ENCODE measurements at regions of chr17 and their contacts with region 1.

Region 1: DNA sequence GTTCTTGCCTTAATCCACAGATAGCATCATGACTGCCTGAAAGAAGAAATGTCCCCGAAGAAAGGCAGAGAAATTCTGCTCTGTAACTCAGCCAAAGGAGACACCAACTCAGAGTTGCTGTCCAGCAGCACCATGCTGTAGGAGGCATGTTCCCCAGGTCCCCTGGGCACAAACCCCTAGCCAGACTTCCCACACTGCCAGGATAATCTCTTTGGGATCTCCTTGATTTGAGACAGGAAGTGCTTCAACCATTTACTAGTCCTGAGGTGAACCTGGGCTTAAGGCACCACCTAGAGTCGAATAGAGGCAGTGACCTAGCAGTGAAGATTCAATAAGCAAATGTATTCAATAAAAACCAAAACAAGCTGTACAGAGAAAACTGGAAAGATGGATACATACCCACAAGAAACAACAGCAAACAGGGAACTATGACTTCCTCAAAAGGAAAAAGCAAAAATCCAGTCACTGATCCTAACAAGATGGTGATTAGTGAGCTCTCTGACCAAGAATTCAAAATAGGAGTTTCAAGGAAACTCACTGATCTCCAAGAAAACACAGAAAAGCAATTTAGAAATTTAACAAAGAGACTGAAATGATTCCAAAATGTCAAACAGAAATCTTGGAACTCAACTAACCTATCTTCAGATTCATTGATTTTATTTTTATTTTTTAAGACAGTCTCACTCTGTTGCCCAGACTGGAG is 5.7 kb downstream of the OR4D2 start:
- DNase-seq: peak in 8 of 9 experiments; percentile 19 to 82 (median 44)
- ATAC-seq: peak; percentile 76
- H3K4me3 ChIP-seq: no peak overlapping the region
- H3K4me3 Mint-ChIP-seq: peak overlapping the region; percentile 38
- H3K27ac ChIP-seq: peak overlapping the region in 1 of 2 experiments; percentile 72
- H3K27ac Mint-ChIP-seq: peak overlapping the region; percentile 66
- H3K4me1 ChIP-seq: peaks cover 43% of the 10 kb centered on the region
- H3K4me1 Mint-ChIP-seq: peaks cover 45% of the 10 kb centered on the region
- H3K27me3 ChIP-seq: no peaks in the 10 kb centered on the region
- H3K27me3 Mint-ChIP-seq: peaks cover 4% of the 10 kb centered on the region
- CTCF ChIP-seq: peak; percentile 66

Region 2: DNA sequence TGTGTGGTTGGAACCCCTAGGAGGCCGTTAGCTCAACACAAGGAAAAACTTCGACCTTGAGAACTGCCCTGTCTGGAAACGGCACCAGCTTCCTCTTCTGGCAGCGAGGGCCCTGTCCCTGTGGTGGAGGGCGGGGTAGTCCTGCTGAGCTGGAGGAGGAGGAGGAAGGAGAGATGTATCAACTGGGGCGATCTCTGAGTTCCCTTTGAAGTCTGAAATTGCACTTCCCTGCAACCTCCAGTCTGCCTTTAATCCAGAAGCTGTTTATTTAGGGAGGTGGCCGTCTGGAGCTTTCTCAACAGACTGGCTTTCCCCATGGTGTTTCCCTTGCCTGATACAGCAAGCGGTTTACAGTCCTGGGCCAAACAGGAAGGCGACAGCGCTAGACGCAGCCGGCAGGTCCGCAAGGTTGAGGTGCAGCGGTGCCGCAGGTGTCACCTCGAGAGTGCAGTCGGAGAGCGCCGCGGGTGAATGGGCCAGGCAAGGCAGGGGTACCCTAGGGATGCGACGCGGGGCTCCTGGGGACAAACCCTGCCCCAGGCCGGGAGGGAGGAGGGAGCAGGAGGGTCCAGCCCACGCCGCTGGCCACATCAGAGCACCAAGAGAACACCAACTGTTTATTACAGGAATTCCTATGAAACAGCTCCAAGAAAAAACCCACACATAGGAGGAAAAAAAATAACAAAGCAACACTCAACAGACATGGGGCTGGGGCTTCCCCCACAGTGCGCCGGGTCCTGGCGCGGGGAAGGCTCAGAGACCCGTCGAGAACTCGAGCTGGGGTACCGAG is 311.3 kb before region 1 on chr17:
- CTCF ChIA-PET with region 1: interaction called, 13 read pairs
- POLR2A ChIA-PET with region 1: interaction called, 3 read pairs
- intact Hi-C with region 1: loop called in 1 of 2 experiments (anchors 5 kb)
- DNase-seq: peak in 8 of 9 experiments; percentile 19 to 68 (median 41)
- ATAC-seq: peak; percentile 70
- H3K4me3 ChIP-seq: peak overlapping the region; percentile 34
- H3K4me3 Mint-ChIP-seq: peak overlapping the region; percentile 83
- H3K27ac ChIP-seq: no peak overlapping the region
- H3K27ac Mint-ChIP-seq: peak overlapping the region; percentile 41
- H3K4me1 ChIP-seq: peaks cover 11% of the 10 kb centered on the region
- H3K4me1 Mint-ChIP-seq: peaks cover 14% of the 10 kb centered on the region
- H3K27me3 ChIP-seq: peaks cover 0 to 7% of the 10 kb centered on the region in 2 experiments
- H3K27me3 Mint-ChIP-seq: peaks cover 10% of the 10 kb centered on the region
- CTCF ChIP-seq: no peak

Region 3: GRCh38 chr17:57987580-57988421 is 184.7 kb before region 1 on chr17 and contains the start of gene VEZF1:
- CTCF ChIA-PET with region 1: interaction called, 3 read pairs
- POLR2A ChIA-PET with region 1: no interaction called
- intact Hi-C with region 1: loop called in 1 of 2 experiments (anchors 5 kb)
- DNase-seq: peak; percentile 53 to 91 (median 79)
- ATAC-seq: peak; percentile 67
- H3K4me3 ChIP-seq: peak within 1 kb of the TSS; percentile 83 to 90
- H3K4me3 Mint-ChIP-seq: peak within 1 kb of the TSS; percentile 94
- H3K27ac ChIP-seq: peak within 1 kb of the TSS; percentile 57 to 72
- H3K27ac Mint-ChIP-seq: peak within 1 kb of the TSS; percentile 93
- H3K4me1 ChIP-seq: peaks cover 49% of the 10 kb centered on the region
- H3K4me1 Mint-ChIP-seq: peaks cover 63% of the 10 kb centered on the region
- H3K27me3 ChIP-seq: no peaks in the 10 kb centered on the region
- H3K27me3 Mint-ChIP-seq: no peaks in the 10 kb centered on the region
- CTCF ChIP-seq: no peak
- total RNA-seq, gene VEZF1: 45.2 to 46.6 TPM

Region 4: DNA sequence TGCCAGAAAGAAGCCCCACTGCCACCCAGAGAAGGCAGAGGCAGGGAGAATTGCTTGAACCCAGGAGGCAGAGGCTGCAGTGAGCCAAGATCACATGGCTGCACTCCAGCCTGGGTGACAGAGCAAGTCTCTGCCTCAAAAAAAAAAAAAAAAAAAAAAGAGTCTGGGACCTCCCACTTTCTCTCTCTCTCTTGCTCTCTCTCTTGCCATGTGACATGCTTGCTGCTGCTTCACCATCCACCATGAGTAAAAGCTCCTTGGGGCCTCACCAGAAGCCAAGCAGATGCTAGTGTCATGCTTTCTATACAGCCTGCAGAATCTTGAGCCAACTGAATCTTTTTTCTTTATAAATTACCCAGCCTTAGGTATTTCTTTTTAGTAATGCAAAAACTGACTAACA is 143.9 kb before region 1 on chr17:
- CTCF ChIA-PET with region 1: no interaction called
- POLR2A ChIA-PET with region 1: no interaction called
- intact Hi-C with region 1: no loop called
- DNase-seq: no peak
- ATAC-seq: no peak
- H3K4me3 ChIP-seq: no peak overlapping the region
- H3K4me3 Mint-ChIP-seq: no peak overlapping the region
- H3K27ac ChIP-seq: no peak overlapping the region
- H3K27ac Mint-ChIP-seq: no peak overlapping the region
- H3K4me1 ChIP-seq: no peaks in the 10 kb centered on the region
- H3K4me1 Mint-ChIP-seq: no peaks in the 10 kb centered on the region
- H3K27me3 ChIP-seq: peaks cover 2 to 7% of the 10 kb centered on the region in 2 experiments
- H3K27me3 Mint-ChIP-seq: peaks cover 38% of the 10 kb centered on the region
- CTCF ChIP-seq: no peak

Region 5: DNA sequence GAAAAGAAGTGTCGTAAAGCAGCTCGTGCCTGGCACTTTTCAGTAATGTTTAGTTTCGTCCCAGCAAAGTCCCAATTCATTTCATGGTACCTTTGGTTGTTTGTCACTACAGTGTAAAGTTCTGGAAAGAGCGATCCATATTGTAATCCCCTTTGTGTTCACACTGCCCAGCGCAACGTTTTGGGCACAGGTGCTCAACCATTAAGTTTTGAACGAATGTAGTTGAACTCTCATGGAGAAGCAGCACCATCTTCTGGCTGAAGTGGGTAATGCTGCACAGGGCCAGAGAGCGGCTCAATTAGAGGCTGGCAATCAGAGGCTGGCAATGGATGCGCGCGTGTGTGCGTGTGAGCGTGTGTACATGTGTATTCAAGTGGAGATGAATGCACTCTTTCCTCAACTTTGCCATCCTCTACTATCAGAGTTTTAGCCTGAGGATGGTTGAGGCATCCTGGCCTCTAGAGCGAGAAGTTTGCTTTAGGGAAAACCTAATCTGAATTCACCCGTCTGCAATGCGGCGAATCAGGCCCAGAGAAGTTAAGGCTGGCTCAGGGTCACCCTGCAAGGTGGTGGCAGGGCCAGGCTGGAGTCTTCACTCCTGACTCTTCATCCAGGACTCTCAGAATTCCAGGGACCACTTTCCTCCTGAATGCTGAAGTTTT is 59.4 kb before region 1 on chr17:
- CTCF ChIA-PET with region 1: interaction called, 61 read pairs
- POLR2A ChIA-PET with region 1: interaction called, 6 read pairs
- intact Hi-C with region 1: no loop called
- DNase-seq: peak; percentile 76 to 89 (median 83)
- ATAC-seq: peak; percentile 99
- H3K4me3 ChIP-seq: no peak overlapping the region
- H3K4me3 Mint-ChIP-seq: no peak overlapping the region
- H3K27ac ChIP-seq: no peak overlapping the region
- H3K27ac Mint-ChIP-seq: no peak overlapping the region
- H3K4me1 ChIP-seq: no peaks in the 10 kb centered on the region
- H3K4me1 Mint-ChIP-seq: peaks cover 5% of the 10 kb centered on the region
- H3K27me3 ChIP-seq: no peaks in the 10 kb centered on the region
- H3K27me3 Mint-ChIP-seq: peaks cover 24% of the 10 kb centered on the region
- CTCF ChIP-seq: peak; percentile 96

Region 6: GRCh38 chr17:58136669-58137283 is 35.7 kb before region 1 on chr17:
- CTCF ChIA-PET with region 1: interaction called, 10 read pairs
- POLR2A ChIA-PET with region 1: no interaction called
- intact Hi-C with region 1: no loop called
- DNase-seq: no peak
- ATAC-seq: no peak
- H3K4me3 ChIP-seq: no peak overlapping the region
- H3K4me3 Mint-ChIP-seq: no peak overlapping the region
- H3K27ac ChIP-seq: no peak overlapping the region
- H3K27ac Mint-ChIP-seq: no peak overlapping the region
- H3K4me1 ChIP-seq: no peaks in the 10 kb centered on the region
- H3K4me1 Mint-ChIP-seq: peaks cover 5% of the 10 kb centered on the region
- H3K27me3 ChIP-seq: no peaks in the 10 kb centered on the region
- H3K27me3 Mint-ChIP-seq: no peaks in the 10 kb centered on the region
- CTCF ChIP-seq: no peak

Region 7: DNA sequence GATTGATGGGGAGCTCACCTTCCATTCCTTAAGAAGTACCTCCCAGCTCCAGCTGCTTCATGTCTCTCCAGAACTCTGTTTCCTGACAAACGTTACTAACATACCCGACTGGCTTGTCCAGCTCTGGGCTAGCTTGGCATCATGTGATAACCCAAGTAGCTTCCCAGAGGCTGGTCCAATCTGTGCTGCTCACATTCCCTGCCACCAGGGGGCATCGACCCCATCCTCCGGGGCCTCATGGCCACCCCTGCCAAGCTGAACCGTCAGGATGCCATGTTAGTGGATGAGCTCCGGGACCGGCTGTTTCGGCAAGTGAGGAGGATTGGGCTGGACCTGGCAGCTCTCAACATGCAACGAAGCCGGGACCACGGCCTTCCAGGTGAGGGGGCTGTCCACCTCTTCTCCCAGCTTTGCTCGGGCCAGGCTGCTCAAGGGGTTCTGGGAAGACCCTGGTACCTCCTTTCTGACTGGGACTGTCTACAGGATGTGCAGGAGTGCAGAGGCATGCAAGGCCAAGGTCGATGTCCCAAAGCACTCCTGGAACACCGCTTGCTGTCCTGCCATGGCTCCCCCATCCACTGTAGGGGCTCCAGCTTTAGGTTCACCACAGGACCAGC is 27.6 kb after region 1 on chr17:
- CTCF ChIA-PET with region 1: interaction called, 13 read pairs
- POLR2A ChIA-PET with region 1: no interaction called
- intact Hi-C with region 1: no loop called
- DNase-seq: peak; percentile 13 to 71 (median 56)
- ATAC-seq: peak; percentile 67
- H3K4me3 ChIP-seq: no peak overlapping the region
- H3K4me3 Mint-ChIP-seq: no peak overlapping the region
- H3K27ac ChIP-seq: no peak overlapping the region
- H3K27ac Mint-ChIP-seq: no peak overlapping the region
- H3K4me1 ChIP-seq: no peaks in the 10 kb centered on the region
- H3K4me1 Mint-ChIP-seq: peaks cover 3% of the 10 kb centered on the region
- H3K27me3 ChIP-seq: peaks cover 0 to 5% of the 10 kb centered on the region in 2 experiments
- H3K27me3 Mint-ChIP-seq: peaks cover 15% of the 10 kb centered on the region
- CTCF ChIP-seq: peak; percentile 59

Region 8: DNA sequence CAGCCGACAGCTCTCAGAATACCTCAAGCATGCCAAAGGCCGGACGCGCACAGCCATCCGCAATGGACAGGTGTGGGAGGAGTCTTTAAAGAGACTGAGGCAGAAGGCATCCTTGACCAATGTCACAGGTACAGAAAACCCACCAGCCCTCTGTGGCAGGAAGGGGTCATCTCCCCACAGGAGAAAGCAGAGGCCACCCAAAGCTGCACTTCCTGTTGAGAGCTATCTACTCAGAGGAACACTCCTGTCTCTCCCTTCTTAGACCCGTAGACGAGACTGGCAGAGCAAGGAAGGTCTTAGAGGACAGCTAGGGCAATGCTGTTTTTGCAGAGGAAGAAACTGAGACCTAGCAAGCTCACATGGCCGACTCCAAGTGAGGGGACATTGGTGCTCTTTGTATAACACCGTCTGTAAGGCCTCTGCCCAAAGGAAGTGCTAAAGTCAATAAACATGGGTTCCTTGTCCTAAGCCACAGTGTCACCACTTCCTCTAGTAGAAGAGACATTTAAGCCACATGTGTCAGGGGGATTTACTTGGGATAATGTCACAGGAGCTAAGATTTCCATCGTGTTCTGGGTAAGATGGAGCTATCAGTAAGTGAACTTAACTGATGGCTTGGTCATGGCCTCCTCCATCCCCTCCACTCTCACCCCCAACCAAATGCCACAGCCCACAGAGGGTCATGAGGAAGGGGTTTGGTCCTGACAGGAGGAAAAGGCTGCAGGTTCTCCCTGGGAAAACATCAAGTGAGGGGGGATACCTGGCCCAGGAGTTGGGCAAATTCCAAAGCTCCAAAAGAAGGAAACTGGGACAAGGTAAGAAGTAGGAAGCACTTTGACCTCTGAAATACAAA is 75.2 kb after region 1 on chr17:
- CTCF ChIA-PET with region 1: no interaction called
- POLR2A ChIA-PET with region 1: no interaction called
- intact Hi-C with region 1: no loop called
- DNase-seq: no peak
- ATAC-seq: no peak
- H3K4me3 ChIP-seq: no peak overlapping the region
- H3K4me3 Mint-ChIP-seq: no peak overlapping the region
- H3K27ac ChIP-seq: no peak overlapping the region
- H3K27ac Mint-ChIP-seq: no peak overlapping the region
- H3K4me1 ChIP-seq: peaks cover 17% of the 10 kb centered on the region
- H3K4me1 Mint-ChIP-seq: peaks cover 17% of the 10 kb centered on the region
- H3K27me3 ChIP-seq: peaks cover 0 to 5% of the 10 kb centered on the region in 2 experiments
- H3K27me3 Mint-ChIP-seq: peaks cover 18% of the 10 kb centered on the region
- CTCF ChIP-seq: no peak

Measured in CD8-positive, alpha-beta T cell (primary cell).